Naive thymus-derived CD4-positive, alpha-beta T cell (primary cell): ENCODE measurements at regions of chr18 and their contacts with region 1.

Region 1: GRCh38 chr18:76492669-76493212 is 2.3 kb downstream of the ZNF516 start:
- DNase-seq: peak; percentile 97 to 99 (median 99)
- ATAC-seq: peak; percentile 86
- H3K4me3 ChIP-seq: peak overlapping the region; percentile 87
- H3K4me3 Mint-ChIP-seq: peak overlapping the region; percentile 94 to 96 (median 95)
- H3K27ac ChIP-seq: peak overlapping the region; percentile 65
- H3K27ac Mint-ChIP-seq: peak overlapping the region; percentile 57 to 95 (median 87)
- H3K4me1 ChIP-seq: peaks cover 8 to 9% of the 10 kb centered on the region in 2 donors
- H3K4me1 Mint-ChIP-seq: peaks cover 28 to 53% (median 41%) of the 10 kb centered on the region in 7 donors
- H3K27me3 ChIP-seq: no peaks in the 10 kb centered on the region
- H3K27me3 Mint-ChIP-seq: peaks cover 0 to 80% (median 0%) of the 10 kb centered on the region in 5 donors

Region 2: GRCh38 chr18:74597662-74598349 is 1894.9 kb before region 1 on chr18 and contains the start of gene ZNF407:
- CTCF ChIA-PET with region 1: no interaction called
- POLR2A ChIA-PET with region 1: no interaction called
- intact Hi-C with region 1: loop called (anchors 2 to 5 kb)
- DNase-seq: peak; percentile 77 to 94 (median 90)
- ATAC-seq: peak; percentile 84
- H3K4me3 ChIP-seq: peak within 1 kb of the TSS; percentile 100
- H3K4me3 Mint-ChIP-seq: peak within 1 kb of the TSS; percentile 89 to 96 (median 95)
- H3K27ac ChIP-seq: peak within 1 kb of the TSS; percentile 88
- H3K27ac Mint-ChIP-seq: peak within 1 kb of the TSS; percentile 95 to 99 (median 98)
- H3K4me1 ChIP-seq: peaks cover 26 to 27% of the 10 kb centered on the region in 2 donors
- H3K4me1 Mint-ChIP-seq: peaks cover 33 to 74% (median 61%) of the 10 kb centered on the region in 7 donors
- H3K27me3 ChIP-seq: no peaks in the 10 kb centered on the region
- H3K27me3 Mint-ChIP-seq: no peaks in the 10 kb centered on the region
- total RNA-seq, gene ZNF407: 23.1 to 31.3 (median 29.7) TPM

Region 3: DNA sequence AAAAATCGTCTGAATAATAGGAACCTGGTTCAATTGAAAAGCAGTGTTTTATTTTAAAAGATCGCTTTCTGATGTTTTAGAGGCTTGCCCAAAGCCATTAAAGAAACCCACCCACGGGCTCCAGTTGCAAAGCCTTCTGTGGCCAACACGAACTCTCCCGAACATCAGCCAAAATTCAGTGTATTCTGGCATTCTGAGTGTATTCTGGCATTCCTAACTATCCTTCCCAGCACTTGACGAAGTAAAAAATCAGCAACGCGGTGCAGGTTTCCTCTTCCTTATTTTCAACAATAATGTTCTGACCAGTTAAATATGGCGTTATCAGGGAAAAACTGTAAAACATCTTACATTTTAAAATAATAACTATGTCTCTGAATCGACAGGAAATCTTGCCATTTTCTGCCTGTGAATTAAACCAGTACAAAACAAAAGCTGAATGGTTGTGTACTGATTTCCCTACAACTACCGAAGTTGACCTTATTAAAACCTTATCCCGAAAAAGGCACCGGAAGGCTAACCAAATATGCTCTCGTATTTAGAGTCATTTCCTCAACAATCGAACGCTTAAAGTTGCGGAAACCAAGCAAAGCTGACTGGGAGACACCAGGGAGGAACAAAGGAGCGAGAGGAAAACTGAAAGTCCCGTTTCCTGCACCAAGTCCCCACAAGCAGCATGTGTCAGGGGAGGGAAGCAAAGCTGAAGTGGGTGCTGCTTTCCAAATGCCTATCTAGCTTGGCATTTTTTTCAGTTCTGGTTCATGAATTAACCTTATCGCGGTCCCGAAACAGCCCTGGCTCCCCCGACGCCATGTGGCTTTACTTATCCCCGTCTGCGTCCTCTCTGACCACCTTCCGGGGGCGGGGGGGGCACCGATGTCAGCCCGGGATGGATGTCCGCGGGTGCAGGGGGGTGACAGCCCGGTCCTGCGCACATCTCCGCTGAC is 42.0 kb before region 1 on chr18:
- CTCF ChIA-PET with region 1: no interaction called
- POLR2A ChIA-PET with region 1: interaction called, 3 read pairs
- intact Hi-C with region 1: loop called (anchors 1 to 5 kb)
- DNase-seq: peak in 3 of 9 donors; percentile 4 to 10 (median 9)
- ATAC-seq: peak; percentile 38
- H3K4me3 ChIP-seq: peak overlapping the region; percentile 56
- H3K4me3 Mint-ChIP-seq: peak overlapping the region; percentile 79 to 95 (median 89)
- H3K27ac ChIP-seq: peak overlapping the region; percentile 45
- H3K27ac Mint-ChIP-seq: peak overlapping the region in 7 of 9 donors; percentile 36 to 80 (median 62)
- H3K4me1 ChIP-seq: peaks cover 0 to 19% of the 10 kb centered on the region in 2 donors
- H3K4me1 Mint-ChIP-seq: peaks cover 9 to 86% (median 78%) of the 10 kb centered on the region in 7 donors
- H3K27me3 ChIP-seq: no peaks in the 10 kb centered on the region
- H3K27me3 Mint-ChIP-seq: peaks cover 0 to 44% (median 0%) of the 10 kb centered on the region in 5 donors

Region 4: DNA sequence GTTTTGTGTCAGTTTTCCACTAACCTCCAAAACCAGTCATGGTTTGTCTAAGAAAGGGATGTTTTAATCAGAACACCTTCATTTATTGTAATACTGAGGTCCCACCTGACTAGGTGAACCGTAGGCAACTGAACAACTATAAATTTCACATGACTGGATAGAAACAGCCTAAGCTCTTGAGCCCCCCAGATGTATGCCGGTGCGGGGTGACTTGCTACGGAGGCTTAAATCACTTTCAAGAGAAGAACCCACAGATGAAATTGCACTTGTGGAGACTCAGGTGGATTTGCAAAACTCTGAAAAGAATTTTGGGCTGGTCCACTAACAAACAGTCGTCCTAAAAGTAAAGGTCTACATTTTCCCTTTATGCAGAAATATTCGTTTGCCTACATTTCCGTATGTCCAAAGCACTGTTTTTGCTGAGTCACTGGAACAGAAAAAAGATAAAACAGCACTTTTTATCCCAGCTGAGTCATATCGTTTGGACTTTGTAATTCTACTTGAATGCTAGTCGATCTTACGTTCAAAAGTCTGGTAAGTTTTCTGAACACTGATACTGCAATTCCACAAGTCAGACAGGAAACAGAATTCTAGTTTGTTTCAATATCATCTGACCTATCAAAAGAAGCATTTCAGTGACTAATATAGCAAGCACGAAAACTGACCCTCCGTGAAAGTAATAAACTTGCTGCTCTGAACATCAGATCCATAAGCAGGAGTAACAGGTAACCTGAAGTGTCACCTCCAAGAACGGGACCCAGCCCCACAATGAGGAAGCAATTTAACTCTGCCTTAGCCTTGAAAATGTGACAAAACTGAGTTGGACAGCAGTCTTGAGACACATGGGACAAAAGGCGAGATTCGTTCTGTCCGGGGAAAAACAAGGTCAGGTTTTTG is 15.8 kb before region 1 on chr18:
- CTCF ChIA-PET with region 1: no interaction called
- POLR2A ChIA-PET with region 1: interaction called, 3 read pairs
- intact Hi-C with region 1: loop called in 1 of 2 experiments (anchors 2 kb)
- DNase-seq: no peak
- ATAC-seq: no peak
- H3K4me3 ChIP-seq: no peak overlapping the region
- H3K4me3 Mint-ChIP-seq: peak overlapping the region in 8 of 10 donors; percentile 5 to 72 (median 50)
- H3K27ac ChIP-seq: no peak overlapping the region
- H3K27ac Mint-ChIP-seq: peak overlapping the region in 4 of 9 donors; percentile 26 to 72 (median 28)
- H3K4me1 ChIP-seq: peaks cover 0 to 7% of the 10 kb centered on the region in 2 donors
- H3K4me1 Mint-ChIP-seq: peaks cover 4 to 74% (median 58%) of the 10 kb centered on the region in 7 donors
- H3K27me3 ChIP-seq: no peaks in the 10 kb centered on the region
- H3K27me3 Mint-ChIP-seq: peaks cover 0 to 36% (median 0%) of the 10 kb centered on the region in 5 donors

Region 5: GRCh38 chr18:76721207-76721996 is 228.7 kb after region 1 on chr18:
- CTCF ChIA-PET with region 1: no interaction called
- POLR2A ChIA-PET with region 1: interaction called, 3 read pairs
- intact Hi-C with region 1: loop called (anchors 1 to 2 kb)
- DNase-seq: peak; percentile 29 to 89 (median 84)
- ATAC-seq: peak; percentile 95
- H3K4me3 ChIP-seq: peak overlapping the region; percentile 43
- H3K4me3 Mint-ChIP-seq: peak overlapping the region; percentile 78 to 94 (median 85)
- H3K27ac ChIP-seq: no peak overlapping the region
- H3K27ac Mint-ChIP-seq: peak overlapping the region; percentile 16 to 89 (median 84)
- H3K4me1 ChIP-seq: peaks cover 41 to 45% of the 10 kb centered on the region in 2 donors
- H3K4me1 Mint-ChIP-seq: peaks cover 34 to 62% (median 50%) of the 10 kb centered on the region in 7 donors
- H3K27me3 ChIP-seq: no peaks in the 10 kb centered on the region
- H3K27me3 Mint-ChIP-seq: peaks cover 0 to 30% (median 0%) of the 10 kb centered on the region in 5 donors

Region 6: GRCh38 chr18:77067291-77068061 is 574.7 kb after region 1 on chr18:
- CTCF ChIA-PET with region 1: no interaction called
- POLR2A ChIA-PET with region 1: no interaction called
- intact Hi-C with region 1: loop called (anchors 5 to 10 kb)
- DNase-seq: peak in 1 of 9 donors; percentile 74
- ATAC-seq: peak; percentile 60
- H3K4me3 ChIP-seq: peak overlapping the region; percentile 35
- H3K4me3 Mint-ChIP-seq: peak overlapping the region; percentile 54 to 85 (median 70)
- H3K27ac ChIP-seq: peak overlapping the region; percentile 52
- H3K27ac Mint-ChIP-seq: peak overlapping the region; percentile 88 to 100 (median 97)
- H3K4me1 ChIP-seq: peaks cover 85 to 100% of the 10 kb centered on the region in 2 donors
- H3K4me1 Mint-ChIP-seq: peaks cover 70 to 100% (median 96%) of the 10 kb centered on the region in 7 donors
- H3K27me3 ChIP-seq: no peaks in the 10 kb centered on the region
- H3K27me3 Mint-ChIP-seq: no peaks in the 10 kb centered on the region

Region 7: DNA sequence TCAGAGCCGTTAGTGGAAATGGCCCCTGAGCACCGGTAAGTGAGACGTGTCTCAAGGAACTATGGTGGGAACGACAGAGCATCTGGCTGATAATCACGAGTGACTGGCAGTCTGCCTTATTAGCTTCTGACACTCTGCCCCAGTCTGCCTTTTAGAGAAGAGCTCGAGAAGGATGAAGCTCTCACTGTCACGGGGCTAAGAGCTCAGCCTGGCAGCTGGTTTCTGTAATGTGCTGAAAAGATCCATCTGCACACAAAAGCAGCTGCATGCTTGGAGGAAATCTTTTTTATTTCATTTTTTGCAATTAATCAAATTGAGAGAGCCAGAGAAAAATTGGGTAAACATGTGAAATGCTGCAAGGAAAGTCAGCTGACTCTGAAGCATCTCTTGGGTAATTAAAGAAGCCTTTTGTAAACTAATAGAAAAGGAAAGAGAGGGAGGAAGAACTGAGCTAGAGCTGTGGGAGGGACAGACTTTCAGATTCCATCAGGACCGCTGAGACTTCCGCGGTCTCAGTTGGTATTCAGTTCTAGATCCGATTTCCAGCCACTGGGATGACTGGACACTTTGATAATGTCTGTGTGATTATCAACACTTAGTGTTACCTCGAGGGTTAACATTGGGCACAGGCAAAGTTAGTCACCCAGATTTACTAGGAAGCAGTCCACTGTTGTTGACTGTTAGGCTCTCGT is 615.4 kb after region 1 on chr18:
- CTCF ChIA-PET with region 1: no interaction called
- POLR2A ChIA-PET with region 1: no interaction called
- intact Hi-C with region 1: loop called (anchors 2 to 5 kb)
- DNase-seq: peak in 1 of 9 donors; percentile 29
- ATAC-seq: peak; percentile 43
- H3K4me3 ChIP-seq: peak overlapping the region; percentile 15
- H3K4me3 Mint-ChIP-seq: peak overlapping the region; percentile 17 to 92 (median 64)
- H3K27ac ChIP-seq: peak overlapping the region; percentile 70
- H3K27ac Mint-ChIP-seq: peak overlapping the region; percentile 78 to 99 (median 97)
- H3K4me1 ChIP-seq: peaks cover 61 to 69% of the 10 kb centered on the region in 2 donors
- H3K4me1 Mint-ChIP-seq: peaks cover 78 to 98% (median 96%) of the 10 kb centered on the region in 7 donors
- H3K27me3 ChIP-seq: no peaks in the 10 kb centered on the region
- H3K27me3 Mint-ChIP-seq: no peaks in the 10 kb centered on the region